OCI-LY7 (cell line): ENCODE measurements at regions of chr1 and their contacts with region 1.

Region 1: DNA sequence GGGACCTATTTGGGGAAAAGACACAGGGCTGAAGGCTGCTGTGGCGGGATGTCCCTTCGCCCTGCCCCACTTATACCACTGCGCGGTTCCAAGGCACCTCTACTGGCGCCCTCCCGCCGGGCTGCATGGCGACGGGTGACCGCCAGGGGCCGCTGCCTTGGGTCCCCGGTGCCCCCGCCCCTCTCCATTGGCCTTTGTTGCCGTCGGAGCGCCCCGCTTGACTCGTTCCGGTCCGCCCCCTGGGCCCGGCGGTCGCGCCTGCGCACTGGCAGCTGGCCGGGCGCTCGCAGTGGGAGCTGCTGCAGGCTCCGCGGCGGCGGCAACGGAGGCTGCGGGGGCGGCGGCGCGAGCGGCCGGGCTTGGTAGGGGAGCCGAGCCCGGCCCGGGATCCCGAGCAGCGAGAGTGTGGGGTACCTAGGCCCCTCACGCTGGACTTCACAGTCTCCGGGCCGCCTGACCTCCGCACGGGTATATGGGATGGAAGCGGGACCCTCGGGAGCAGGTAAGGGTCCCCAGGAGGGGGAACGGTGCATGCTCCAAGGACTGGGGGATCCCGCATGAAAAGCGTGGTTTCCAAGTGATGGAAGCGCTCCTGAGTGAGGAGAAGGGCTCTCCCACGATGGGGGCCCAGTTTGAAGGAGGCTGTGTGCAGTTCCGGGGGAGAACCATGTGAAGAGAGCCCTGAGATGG is at the start of gene AGO1:
- DNase-seq: peak; percentile 95
- H3K4me3 ChIP-seq: peak within 1 kb of the TSS; percentile 99
- H3K27ac ChIP-seq: peak within 1 kb of the TSS; percentile 14
- H3K4me1 ChIP-seq: peaks cover 42% of the 10 kb centered on the region
- CTCF ChIP-seq: peak; percentile 88
- total RNA-seq, gene AGO1: 5.8 and 8.1 TPM in 2 replicates

Region 2: GRCh38 chr1:36088575-36089443 is 205.7 kb after region 1 on chr1 and contains the start of gene ADPRS:
- CTCF ChIA-PET with region 1: no interaction called
- POLR2A ChIA-PET with region 1: interaction called, 5 read pairs
- intact Hi-C with region 1: loop called (anchors 5 kb)
- DNase-seq: peak; percentile 94
- H3K4me3 ChIP-seq: peak within 1 kb of the TSS; percentile 83
- H3K27ac ChIP-seq: peak within 1 kb of the TSS; percentile 35
- H3K4me1 ChIP-seq: peaks cover 16% of the 10 kb centered on the region
- CTCF ChIP-seq: peak; percentile 95
- total RNA-seq, gene ADPRS: 42.3 and 44.3 TPM in 2 replicates